Activated B cell treated with CpG ODN at 0.5 μM for 24 hours (primary cell): ENCODE measurements at regions of chrX and their contacts with region 1.

Region 1: DNA sequence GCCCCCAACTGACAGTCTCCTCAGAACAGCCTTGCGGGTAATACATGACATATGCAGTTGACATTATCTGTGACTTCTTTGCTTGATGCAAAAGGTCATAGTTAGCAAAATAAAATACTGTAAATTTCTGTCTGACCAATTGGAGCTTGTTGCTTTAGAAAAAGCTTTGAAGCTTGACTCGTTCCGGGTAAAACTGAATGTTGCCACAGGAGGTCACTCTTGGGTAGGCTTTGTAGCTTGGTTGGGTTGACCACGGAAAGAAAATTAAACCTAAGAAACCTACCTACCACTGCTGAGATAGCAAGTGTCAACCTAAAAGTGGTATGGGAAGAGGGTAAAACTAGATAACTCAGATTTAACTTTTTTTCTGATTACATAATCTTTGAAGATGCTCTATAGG is 23.2 kb downstream of the PRPS2 start:
- DNase-seq: no peak
- ATAC-seq: peak; percentile 71
- H3K4me3 Mint-ChIP-seq: no peak overlapping the region
- H3K27ac Mint-ChIP-seq: no peak overlapping the region
- H3K4me1 Mint-ChIP-seq: no peaks in the 10 kb centered on the region
- H3K27me3 Mint-ChIP-seq: no peaks in the 10 kb centered on the region
- CTCF ChIP-seq: no peak

Region 2: DNA sequence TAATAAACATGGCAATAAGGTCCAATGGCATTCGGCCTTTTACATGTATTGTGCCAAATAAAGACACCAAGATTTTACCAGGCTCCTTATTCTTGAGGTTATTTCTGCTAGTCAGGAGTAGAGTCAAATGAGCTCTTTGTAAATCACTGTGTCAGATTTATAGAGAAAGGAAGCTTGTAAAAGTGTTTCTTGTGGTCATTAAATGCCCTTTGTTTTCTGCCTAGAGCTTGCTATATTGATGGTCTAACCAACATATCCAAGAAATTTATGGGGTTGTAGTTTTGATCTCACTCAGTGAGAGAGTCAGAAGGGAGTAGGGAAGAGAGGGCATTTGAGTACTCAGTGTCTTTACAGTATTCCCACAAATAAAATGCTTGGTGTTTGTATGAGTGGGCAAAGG is 762.3 kb before region 1 on chrX:
- CTCF ChIA-PET with region 1: no interaction called
- POLR2A ChIA-PET with region 1: no interaction called
- intact Hi-C with region 1: no loop called
- DNase-seq: no peak
- ATAC-seq: no peak
- H3K4me3 Mint-ChIP-seq: no peak overlapping the region
- H3K27ac Mint-ChIP-seq: no peak overlapping the region
- H3K4me1 Mint-ChIP-seq: no peaks in the 10 kb centered on the region
- H3K27me3 Mint-ChIP-seq: no peaks in the 10 kb centered on the region
- CTCF ChIP-seq: no peak

Region 3: DNA sequence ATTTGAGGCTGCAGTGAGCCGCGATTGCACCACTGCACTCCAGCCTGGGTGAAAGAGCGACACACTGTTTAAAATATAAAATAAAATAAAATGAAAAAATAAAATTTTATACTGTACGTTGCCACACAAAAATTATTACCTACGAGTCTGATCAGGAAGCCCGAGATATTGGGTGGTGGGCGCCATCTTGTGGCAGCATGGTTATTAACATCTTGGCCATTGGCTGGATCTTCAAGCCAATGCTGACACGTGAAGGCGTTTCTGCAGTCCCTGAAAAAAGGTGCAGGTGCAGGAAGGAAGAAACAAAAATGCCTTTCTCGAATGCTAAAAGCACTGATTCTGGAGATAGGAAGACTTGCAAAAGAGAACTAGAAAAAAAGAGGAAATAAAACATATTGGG is 87.1 kb after region 1 on chrX:
- CTCF ChIA-PET with region 1: interaction called, 67 read pairs
- POLR2A ChIA-PET with region 1: no interaction called
- intact Hi-C with region 1: loop called (anchors 1 kb)
- DNase-seq: peak; percentile 41
- ATAC-seq: peak; percentile 71
- H3K4me3 Mint-ChIP-seq: no peak overlapping the region
- H3K27ac Mint-ChIP-seq: peak overlapping the region; percentile 60
- H3K4me1 Mint-ChIP-seq: peaks cover 4% of the 10 kb centered on the region
- H3K27me3 Mint-ChIP-seq: no peaks in the 10 kb centered on the region
- CTCF ChIP-seq: no peak

Region 4: GRCh38 chrX:13646154-13646549 is 831.7 kb after region 1 on chrX:
- CTCF ChIA-PET with region 1: interaction called, 5 read pairs
- POLR2A ChIA-PET with region 1: no interaction called
- intact Hi-C with region 1: loop called (anchors 10 kb)
- DNase-seq: no peak
- ATAC-seq: no peak
- H3K4me3 Mint-ChIP-seq: no peak overlapping the region
- H3K27ac Mint-ChIP-seq: no peak overlapping the region
- H3K4me1 Mint-ChIP-seq: peaks cover 3% of the 10 kb centered on the region
- H3K27me3 Mint-ChIP-seq: no peaks in the 10 kb centered on the region
- CTCF ChIP-seq: no peak